Activated B cell treated with CpG ODN at 0.5 μM for 24 hours (primary cell): ENCODE measurements at regions of chr16 and their contacts with region 1.

Region 1: GRCh38 chr16:85759631-85760419 is 8.9 kb upstream of the C16orf74 start:
- DNase-seq: peak; percentile 53
- ATAC-seq: no peak
- H3K4me3 Mint-ChIP-seq: peak overlapping the region; percentile 44
- H3K27ac Mint-ChIP-seq: peak overlapping the region; percentile 100
- H3K4me1 Mint-ChIP-seq: peaks cover 77% of the 10 kb centered on the region
- H3K27me3 Mint-ChIP-seq: no peaks in the 10 kb centered on the region
- CTCF ChIP-seq: no peak

Region 2: GRCh38 chr16:85305996-85306792 is 453.6 kb before region 1 on chr16:
- CTCF ChIA-PET with region 1: no interaction called
- POLR2A ChIA-PET with region 1: interaction called, 5 read pairs
- intact Hi-C with region 1: loop called (anchors 5 kb)
- DNase-seq: peak; percentile 72
- ATAC-seq: peak; percentile 69
- H3K4me3 Mint-ChIP-seq: peak overlapping the region; percentile 29
- H3K27ac Mint-ChIP-seq: peak overlapping the region; percentile 71
- H3K4me1 Mint-ChIP-seq: peaks cover 64% of the 10 kb centered on the region
- H3K27me3 Mint-ChIP-seq: peaks cover 2% of the 10 kb centered on the region
- CTCF ChIP-seq: no peak

Region 3: DNA sequence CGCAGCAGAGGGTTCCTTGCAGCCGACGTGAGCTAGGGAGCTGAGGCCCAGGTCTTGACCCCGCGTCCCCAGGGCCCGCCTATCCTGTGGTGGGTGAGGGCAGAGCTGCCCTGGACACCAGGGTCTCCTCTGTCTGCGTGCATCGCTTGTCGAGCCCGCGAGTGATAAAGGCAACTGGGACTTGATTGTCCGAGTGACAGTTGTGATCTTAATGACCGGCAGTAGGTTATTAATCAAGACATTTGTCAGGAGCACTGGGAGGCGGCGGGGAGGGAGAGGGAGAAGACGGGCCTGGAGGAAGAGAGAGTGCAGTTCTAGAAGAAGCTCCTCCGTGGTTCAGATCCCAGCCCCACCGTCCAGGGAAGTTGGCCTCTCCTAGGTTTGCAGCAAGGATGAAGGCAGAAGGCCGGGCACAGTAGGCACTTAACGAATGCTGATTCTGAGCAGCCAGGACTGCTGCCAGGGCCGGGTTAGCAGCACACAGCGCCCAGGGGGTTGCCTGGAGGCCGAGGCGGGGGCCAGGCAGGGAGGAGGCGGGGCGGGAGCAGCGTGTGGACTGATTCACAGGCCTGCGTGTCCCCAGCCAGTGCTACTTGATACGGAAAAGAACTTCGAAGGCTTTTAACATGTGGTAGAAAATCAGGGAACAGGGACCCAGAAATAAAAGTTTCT is 158.0 kb before region 1 on chr16:
- CTCF ChIA-PET with region 1: no interaction called
- POLR2A ChIA-PET with region 1: no interaction called
- intact Hi-C with region 1: no loop called
- DNase-seq: no peak
- ATAC-seq: no peak
- H3K4me3 Mint-ChIP-seq: no peak overlapping the region
- H3K27ac Mint-ChIP-seq: no peak overlapping the region
- H3K4me1 Mint-ChIP-seq: peaks cover 55% of the 10 kb centered on the region
- H3K27me3 Mint-ChIP-seq: no peaks in the 10 kb centered on the region
- CTCF ChIP-seq: no peak

Region 4: DNA sequence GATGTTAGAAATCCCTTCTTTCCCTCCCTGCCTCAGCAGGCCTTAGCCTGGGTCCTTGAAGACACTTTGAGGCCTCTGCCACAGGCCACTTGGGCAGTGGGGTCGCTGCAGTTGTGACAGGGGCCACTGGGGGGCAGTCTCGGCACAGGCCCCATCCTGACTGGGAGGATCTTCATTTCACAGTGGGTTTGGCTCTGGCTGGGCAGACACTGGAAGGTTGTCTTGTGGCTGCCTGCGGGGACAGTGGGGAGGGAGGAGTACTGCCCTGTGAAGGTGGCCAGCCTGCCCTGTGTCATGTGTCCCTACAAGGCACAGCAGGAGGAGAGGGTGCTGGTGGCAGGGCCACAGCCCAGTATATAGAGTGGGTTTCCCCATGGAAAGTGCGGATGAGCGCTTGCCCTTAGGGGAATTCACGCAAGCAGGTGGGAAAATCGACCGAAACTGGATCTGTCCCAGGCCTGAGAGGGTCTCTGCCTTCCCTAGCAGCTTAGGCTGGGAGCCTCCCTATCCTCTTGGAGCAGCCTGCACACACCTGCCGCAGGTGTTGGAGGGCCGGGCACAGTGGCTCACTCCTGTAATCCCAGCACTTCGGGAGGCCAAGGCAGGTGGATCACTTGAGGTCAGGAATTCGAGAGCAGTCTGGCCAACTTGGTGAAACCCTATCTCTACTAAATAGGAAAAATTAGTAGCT is 99.9 kb before region 1 on chr16:
- CTCF ChIA-PET with region 1: interaction called, 22 read pairs
- POLR2A ChIA-PET with region 1: no interaction called
- intact Hi-C with region 1: loop called (anchors 1 kb)
- DNase-seq: peak; percentile 70
- ATAC-seq: peak; percentile 97
- H3K4me3 Mint-ChIP-seq: no peak overlapping the region
- H3K27ac Mint-ChIP-seq: peak overlapping the region; percentile 67
- H3K4me1 Mint-ChIP-seq: no peaks in the 10 kb centered on the region
- H3K27me3 Mint-ChIP-seq: no peaks in the 10 kb centered on the region
- CTCF ChIP-seq: no peak

Region 5: DNA sequence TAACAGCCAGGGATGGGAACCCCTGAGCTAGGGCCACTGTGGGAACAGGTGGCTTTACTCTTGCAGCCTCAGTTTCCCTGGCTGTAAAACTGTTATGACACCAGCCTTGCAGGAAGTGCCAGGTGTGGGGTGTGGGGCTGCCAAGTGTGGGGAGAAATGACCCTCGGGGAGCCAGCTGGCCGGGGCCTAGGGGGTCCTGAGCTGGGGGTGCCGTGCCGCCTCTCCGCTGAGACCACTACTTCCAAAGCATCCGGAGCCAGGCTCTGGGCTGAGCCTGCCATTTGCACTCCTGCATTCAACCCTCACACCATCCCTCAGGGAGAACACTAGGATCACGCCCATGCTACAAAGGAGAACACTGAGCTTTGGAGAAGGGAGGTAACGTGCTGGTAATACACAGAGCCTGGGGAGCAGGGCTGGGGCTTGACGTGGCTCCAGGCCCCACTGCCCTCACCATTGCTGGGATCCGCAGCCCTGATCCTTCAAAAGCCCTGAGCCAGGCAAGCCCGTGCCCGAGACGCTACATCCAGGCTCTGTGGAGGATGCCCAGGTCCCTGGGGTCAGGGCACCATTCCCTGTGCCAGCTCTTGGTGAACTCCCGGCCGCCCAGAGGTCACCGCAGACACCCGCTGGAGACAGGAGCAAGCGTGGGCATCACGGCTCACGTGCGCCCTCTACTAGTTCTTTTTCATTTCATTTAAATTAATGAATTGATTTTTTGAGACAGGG is 42.3 kb before region 1 on chr16:
- CTCF ChIA-PET with region 1: interaction called, 9 read pairs
- POLR2A ChIA-PET with region 1: interaction called, 13 read pairs
- intact Hi-C with region 1: loop called (anchors 1 kb)
- DNase-seq: peak; percentile 38
- ATAC-seq: peak; percentile 57
- H3K4me3 Mint-ChIP-seq: no peak overlapping the region
- H3K27ac Mint-ChIP-seq: no peak overlapping the region
- H3K4me1 Mint-ChIP-seq: peaks cover 18% of the 10 kb centered on the region
- H3K27me3 Mint-ChIP-seq: no peaks in the 10 kb centered on the region
- CTCF ChIP-seq: no peak

Region 6: GRCh38 chr16:85829751-85830445 is 70.1 kb after region 1 on chr16:
- CTCF ChIA-PET with region 1: no interaction called
- POLR2A ChIA-PET with region 1: interaction called, 3 read pairs
- intact Hi-C with region 1: loop called (anchors 2 kb)
- DNase-seq: no peak
- ATAC-seq: no peak
- H3K4me3 Mint-ChIP-seq: peak overlapping the region; percentile 67
- H3K27ac Mint-ChIP-seq: peak overlapping the region; percentile 88
- H3K4me1 Mint-ChIP-seq: peaks cover 57% of the 10 kb centered on the region
- H3K27me3 Mint-ChIP-seq: no peaks in the 10 kb centered on the region
- CTCF ChIP-seq: no peak

Region 7: DNA sequence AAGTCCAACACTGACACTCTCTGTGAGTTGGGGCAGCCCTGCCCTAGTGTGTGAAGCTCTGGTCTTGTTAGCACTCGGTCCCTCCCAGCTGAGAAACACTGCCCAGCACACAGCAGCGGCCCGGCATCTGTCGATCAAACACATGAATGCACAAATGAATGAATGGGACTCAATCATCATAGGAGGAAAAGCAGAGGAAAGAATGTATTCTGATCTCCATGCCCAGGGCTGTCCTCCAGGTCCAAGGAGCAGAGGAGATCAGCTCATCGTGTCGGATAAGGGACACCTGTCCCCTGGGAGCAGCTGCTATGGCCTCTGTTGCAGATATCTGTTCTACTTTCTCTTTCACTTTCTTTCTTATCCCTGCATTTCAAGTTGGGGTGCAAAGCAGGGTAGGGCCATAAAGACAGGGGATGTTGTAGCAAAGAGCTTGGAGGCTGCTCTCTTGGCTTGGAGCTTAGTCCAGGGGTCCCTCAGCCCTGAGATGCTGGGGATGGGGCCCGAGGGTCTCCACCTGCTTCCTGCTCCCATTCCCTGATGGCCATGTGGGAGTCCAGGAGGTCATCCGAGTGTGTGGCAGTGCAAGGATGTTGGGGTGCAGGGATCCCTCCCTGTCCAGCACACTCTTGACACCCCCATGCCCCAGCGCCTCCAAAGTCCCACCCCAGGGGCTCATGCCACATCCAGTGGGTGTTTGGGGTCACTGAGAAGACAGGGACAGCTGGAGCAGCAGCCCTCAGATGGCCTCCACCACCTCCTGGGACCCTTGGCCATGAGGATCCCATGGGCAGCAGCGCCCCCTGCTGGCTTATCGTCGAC is 227.3 kb after region 1 on chr16:
- CTCF ChIA-PET with region 1: no interaction called
- POLR2A ChIA-PET with region 1: interaction called, 5 read pairs
- intact Hi-C with region 1: loop called (anchors 2 kb)
- DNase-seq: peak; percentile 36
- ATAC-seq: no peak
- H3K4me3 Mint-ChIP-seq: peak overlapping the region; percentile 5
- H3K27ac Mint-ChIP-seq: peak overlapping the region; percentile 47
- H3K4me1 Mint-ChIP-seq: peaks cover 98% of the 10 kb centered on the region
- H3K27me3 Mint-ChIP-seq: no peaks in the 10 kb centered on the region
- CTCF ChIP-seq: no peak